PC-3 (cell line): ENCODE measurements at regions of chr2 and their contacts with region 1.

Region 1: GRCh38 chr2:211181635-211182034 is 625.2 kb downstream of the CPS1 start:
- DNase-seq: peak; percentile 44
- ATAC-seq: peak; percentile 84
- H3K4me3 ChIP-seq: no peak overlapping the region
- H3K27ac ChIP-seq: no peak overlapping the region
- H3K4me1 ChIP-seq: 0 out of 2 replicates have a peak, but pooled peaks cover 8% of the 10 kb centered on the region
- H3K27me3 ChIP-seq: no peaks in the 10 kb centered on the region; the same call in 1 of the 2 replicates
- CTCF ChIP-seq: no peak

Region 2: DNA sequence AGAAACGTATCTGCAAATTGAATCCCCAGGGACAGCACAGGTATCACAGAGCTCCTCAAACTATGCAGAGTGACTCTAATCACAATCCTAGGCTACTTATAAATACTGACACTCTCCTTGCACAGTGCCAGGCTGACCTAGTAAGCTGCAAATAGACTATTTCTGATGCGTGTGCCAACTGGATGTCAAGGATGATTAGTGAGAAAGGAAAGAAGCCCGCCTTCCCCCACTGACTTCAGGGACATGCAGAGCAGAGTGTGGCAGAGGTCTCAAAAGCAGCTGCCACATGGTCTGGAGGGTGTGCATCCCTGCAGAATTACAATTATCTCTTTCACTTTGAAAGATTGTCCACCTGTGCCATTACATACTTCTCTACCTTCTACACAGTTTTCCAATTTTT is 389.6 kb before region 1 on chr2:
- CTCF ChIA-PET with region 1: no interaction called
- POLR2A ChIA-PET with region 1: interaction called, 11 read pairs
- intact Hi-C with region 1: no loop called
- DNase-seq: no peak
- ATAC-seq: no peak
- H3K4me3 ChIP-seq: no peak overlapping the region
- H3K27ac ChIP-seq: no peak overlapping the region
- H3K4me1 ChIP-seq: no peaks in the 10 kb centered on the region
- H3K27me3 ChIP-seq: peaks cover 16% of the 10 kb centered on the region; the same call in 1 of the 2 replicates
- CTCF ChIP-seq: no peak

Region 3: GRCh38 chr2:210873631-210874030 is 308.0 kb before region 1 on chr2:
- CTCF ChIA-PET with region 1: no interaction called
- POLR2A ChIA-PET with region 1: no interaction called
- intact Hi-C with region 1: no loop called
- DNase-seq: no peak
- ATAC-seq: no peak
- H3K4me3 ChIP-seq: no peak overlapping the region
- H3K27ac ChIP-seq: no peak overlapping the region
- H3K4me1 ChIP-seq: no peaks in the 10 kb centered on the region
- H3K27me3 ChIP-seq: no peaks in the 10 kb centered on the region; the same call in 1 of the 2 replicates
- CTCF ChIP-seq: no peak